HCT116 (cell line): ENCODE measurements at regions of chr11 and their contacts with region 1.

Region 1: DNA sequence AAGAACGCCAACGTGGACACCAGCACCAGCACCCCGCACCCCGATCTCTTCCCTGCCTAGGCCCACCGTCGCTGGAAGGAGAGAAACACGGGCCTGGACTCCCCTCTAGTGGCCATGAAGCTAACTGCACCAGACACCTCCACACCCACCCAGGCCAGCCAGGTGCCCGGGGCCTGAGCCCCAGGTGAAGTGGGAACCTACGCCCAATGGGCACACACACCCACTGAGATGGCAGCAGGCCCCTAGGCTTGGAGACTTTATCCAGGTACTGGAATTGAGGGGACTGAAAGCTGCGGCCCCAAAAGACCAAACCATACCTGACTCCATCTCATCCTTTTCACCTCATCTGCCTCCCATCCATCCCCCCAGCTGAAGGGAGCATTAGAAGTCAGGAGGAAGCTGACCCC is 81.0 kb downstream of the BUD13 start:
- DNase-seq: peak; percentile 6
- ATAC-seq: peak; percentile 95
- H3K4me3 ChIP-seq: no peak overlapping the region
- H3K27ac ChIP-seq: no peak overlapping the region
- H3K4me1 ChIP-seq: peaks cover 0 to 8% of the 10 kb centered on the region in 2 experiments; a peak in 2 of 4 replicates
- H3K27me3 ChIP-seq: 0 out of 2 replicates have a peak, but pooled peaks cover 4% of the 10 kb centered on the region
- CTCF ChIP-seq: peak; percentile 68 to 92 (median 85)
- POLR2A ChIP-seq: no peak
- RAD21 ChIP-seq: peak; percentile 88

Region 2: DNA sequence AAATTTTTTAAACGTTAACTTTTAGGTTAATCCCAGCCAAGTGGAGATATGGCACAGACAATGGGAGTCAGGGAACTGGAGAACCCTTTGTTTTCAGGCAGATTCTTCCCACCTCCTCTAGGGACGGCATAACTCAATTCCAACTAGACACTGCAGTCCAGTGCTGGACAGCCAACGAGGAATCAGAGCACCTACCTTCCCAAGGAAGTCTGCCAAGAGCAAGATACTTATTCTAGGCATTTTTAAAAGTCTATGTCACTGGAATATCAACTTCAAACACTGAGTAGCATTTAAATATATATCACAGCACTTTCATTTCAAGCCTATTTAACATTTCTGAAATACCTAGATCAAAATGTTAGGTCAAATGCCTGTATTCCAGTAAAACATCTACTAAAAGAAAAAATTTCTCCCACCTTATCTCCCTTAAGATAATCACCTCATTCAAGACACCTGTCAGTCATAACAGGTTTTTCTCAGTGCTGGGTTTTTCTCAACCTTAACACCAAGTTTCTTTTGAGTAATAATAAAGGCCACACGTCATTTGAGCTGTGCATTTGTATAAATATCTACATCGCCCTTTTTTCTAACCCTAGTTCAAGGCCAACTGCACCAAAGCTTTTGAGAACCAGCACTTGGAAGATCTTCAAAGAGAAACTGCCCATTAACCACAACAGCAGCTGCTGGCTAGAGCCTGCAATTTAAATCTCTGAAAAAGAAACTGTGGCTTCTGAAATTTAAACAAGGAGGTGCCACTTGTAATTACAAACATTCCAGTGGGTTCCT is 1194.7 kb before region 1 on chr11:
- CTCF ChIA-PET with region 1: no interaction called
- POLR2A ChIA-PET with region 1: no interaction called
- RAD21 ChIA-PET with region 1: no interaction called
- intact Hi-C with region 1: loop called (anchors 5 kb)
- DNase-seq: no peak
- ATAC-seq: no peak
- H3K4me3 ChIP-seq: no peak overlapping the region
- H3K27ac ChIP-seq: no peak overlapping the region
- H3K4me1 ChIP-seq: no peaks in the 10 kb centered on the region
- H3K27me3 ChIP-seq: no peaks in the 10 kb centered on the region
- CTCF ChIP-seq: no peak
- POLR2A ChIP-seq: no peak
- RAD21 ChIP-seq: no peak

Region 3: GRCh38 chr11:116217006-116217405 is 474.8 kb before region 1 on chr11:
- CTCF ChIA-PET with region 1: interaction called, 8 read pairs
- POLR2A ChIA-PET with region 1: no interaction called
- RAD21 ChIA-PET with region 1: no interaction called
- intact Hi-C with region 1: loop called (anchors 1 kb)
- DNase-seq: peak; percentile 27
- ATAC-seq: peak; percentile 89
- H3K4me3 ChIP-seq: no peak overlapping the region
- H3K27ac ChIP-seq: no peak overlapping the region
- H3K4me1 ChIP-seq: no peaks in the 10 kb centered on the region
- H3K27me3 ChIP-seq: peaks cover 14% of the 10 kb centered on the region; the same call in 1 of the 2 replicates
- CTCF ChIP-seq: peak; percentile 61 to 91 (median 87)
- POLR2A ChIP-seq: no peak
- RAD21 ChIP-seq: peak; percentile 52

Region 4: DNA sequence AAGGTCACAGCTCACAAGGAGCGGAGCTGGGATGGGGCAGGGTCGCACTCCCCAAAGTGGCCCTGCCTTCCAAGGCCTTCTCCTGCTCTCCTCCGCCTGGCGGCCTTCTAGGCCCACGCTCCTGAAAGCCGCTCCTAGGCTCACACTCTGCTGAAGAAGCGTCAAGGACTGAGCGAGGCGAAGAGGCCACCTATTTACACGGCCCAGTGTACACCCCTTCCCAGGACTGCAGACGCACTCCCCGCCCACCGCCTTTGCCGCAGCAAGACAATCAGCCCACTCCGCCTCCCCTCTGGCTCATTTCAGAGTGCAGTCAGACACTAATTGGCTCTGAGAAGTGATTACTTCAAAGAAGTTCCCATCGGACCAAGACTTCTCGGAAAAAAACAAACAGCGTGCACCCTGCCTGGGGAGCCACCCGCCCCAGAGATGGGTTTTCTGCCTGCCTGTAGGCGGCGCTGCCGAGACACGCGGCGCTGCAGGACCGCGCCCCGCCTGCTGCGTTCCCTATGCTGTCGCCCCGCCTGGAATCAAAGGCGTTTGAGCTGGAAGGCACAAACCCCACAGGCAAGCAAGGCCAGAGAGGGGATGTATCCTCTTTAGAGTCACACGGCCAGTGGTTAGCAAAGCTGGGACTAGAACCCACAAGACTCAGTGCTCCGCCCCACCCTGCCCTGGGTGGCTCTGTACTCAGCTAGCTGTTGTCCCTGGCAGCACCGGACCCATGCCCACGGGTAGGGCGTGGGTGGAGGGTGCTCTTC is 333.8 kb before region 1 on chr11:
- CTCF ChIA-PET with region 1: interaction called, 3 read pairs
- POLR2A ChIA-PET with region 1: no interaction called
- RAD21 ChIA-PET with region 1: no interaction called
- intact Hi-C with region 1: loop called (anchors 5 kb)
- DNase-seq: peak; percentile 37
- ATAC-seq: peak; percentile 97
- H3K4me3 ChIP-seq: no peak overlapping the region
- H3K27ac ChIP-seq: no peak overlapping the region
- H3K4me1 ChIP-seq: no peaks in the 10 kb centered on the region
- H3K27me3 ChIP-seq: peaks cover 34% of the 10 kb centered on the region
- CTCF ChIP-seq: peak; percentile 51 to 95 (median 92); a peak in 5 of 6 replicates
- POLR2A ChIP-seq: no peak
- RAD21 ChIP-seq: peak; percentile 72

Region 5: DNA sequence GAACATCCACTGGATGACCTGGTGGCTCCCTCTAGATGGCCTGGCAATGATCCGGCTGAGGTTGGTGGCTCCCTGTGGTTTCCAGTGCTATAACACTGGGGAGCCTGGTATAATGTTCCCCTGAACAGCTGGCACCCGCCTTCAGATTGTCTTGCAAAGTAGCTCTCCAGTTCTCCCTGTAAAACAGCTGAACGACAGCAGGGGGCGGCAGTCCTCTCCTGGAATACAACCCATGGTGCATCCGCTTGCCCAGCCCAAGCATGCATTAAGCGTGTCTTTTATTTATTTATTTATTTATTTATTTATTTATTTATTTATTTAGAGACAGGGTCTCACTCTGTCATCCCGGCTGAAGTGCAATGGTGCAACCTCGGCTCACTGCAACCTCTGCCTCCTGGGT is 177.9 kb before region 1 on chr11:
- CTCF ChIA-PET with region 1: interaction called, 11 read pairs
- POLR2A ChIA-PET with region 1: no interaction called
- RAD21 ChIA-PET with region 1: no interaction called
- intact Hi-C with region 1: loop called (anchors 1 kb)
- DNase-seq: peak; percentile 46
- ATAC-seq: peak; percentile 84
- H3K4me3 ChIP-seq: no peak overlapping the region
- H3K27ac ChIP-seq: no peak overlapping the region
- H3K4me1 ChIP-seq: no peaks in the 10 kb centered on the region
- H3K27me3 ChIP-seq: peaks cover 25% of the 10 kb centered on the region; the same call in 1 of the 2 replicates
- CTCF ChIP-seq: peak; percentile 43 to 65 (median 56)
- POLR2A ChIP-seq: no peak
- RAD21 ChIP-seq: peak; percentile 60

Region 6: GRCh38 chr11:116707746-116708145 is 16.0 kb after region 1 on chr11:
- CTCF ChIA-PET with region 1: no interaction called
- POLR2A ChIA-PET with region 1: no interaction called
- RAD21 ChIA-PET with region 1: no interaction called
- intact Hi-C with region 1: no loop called
- DNase-seq: no peak
- ATAC-seq: peak; percentile 24; the same call in 1 of the 2 replicates
- H3K4me3 ChIP-seq: no peak overlapping the region
- H3K27ac ChIP-seq: no peak overlapping the region
- H3K4me1 ChIP-seq: no peaks in the 10 kb centered on the region
- H3K27me3 ChIP-seq: no peaks in the 10 kb centered on the region
- CTCF ChIP-seq: no peak
- POLR2A ChIP-seq: no peak
- RAD21 ChIP-seq: no peak

Region 7: DNA sequence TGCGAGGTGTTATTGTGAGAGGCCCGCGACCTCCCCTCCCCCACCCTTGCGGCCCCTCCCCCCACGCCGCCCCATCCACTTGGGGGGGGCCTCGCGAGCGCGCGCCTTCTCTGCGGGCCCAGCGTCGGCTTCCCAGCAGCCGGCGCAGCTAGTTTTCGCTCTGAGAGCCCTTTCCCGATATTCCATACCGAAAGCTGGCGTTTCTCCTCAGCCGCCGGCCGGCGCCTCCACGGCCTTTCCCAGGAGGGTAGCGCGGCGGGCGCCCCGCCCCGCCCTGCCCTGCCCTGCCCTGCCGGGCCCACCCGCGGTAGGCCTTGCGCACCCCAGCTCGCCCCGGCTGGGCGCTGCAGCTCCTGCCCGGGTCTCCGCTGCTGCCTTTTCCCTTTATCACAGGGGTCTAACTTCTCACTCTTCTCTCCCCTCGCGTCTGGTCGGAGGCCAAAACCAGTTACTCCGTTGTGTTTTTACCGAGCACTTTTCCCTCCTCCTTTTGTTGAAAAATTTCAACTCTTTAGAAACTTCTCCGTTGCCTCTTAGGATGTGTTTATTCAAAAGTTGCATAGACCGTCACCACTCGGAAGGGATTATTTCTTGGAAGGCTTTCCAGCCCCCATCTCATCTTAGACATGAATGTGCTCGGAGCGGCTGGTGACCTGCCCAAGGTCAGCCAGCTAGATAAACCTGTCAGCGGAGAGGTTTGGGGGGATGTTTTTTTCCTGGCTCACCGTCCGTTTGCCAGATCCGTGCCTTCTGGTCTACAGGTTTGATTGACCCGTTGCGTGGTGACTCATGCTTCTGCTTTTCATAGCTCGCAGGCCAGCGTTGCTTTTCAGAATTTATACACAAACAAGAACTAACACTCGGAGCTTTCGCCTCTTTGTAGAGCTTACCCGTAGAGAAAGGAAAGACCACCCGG is 453.0 kb after region 1 on chr11:
- CTCF ChIA-PET with region 1: no interaction called
- POLR2A ChIA-PET with region 1: no interaction called
- RAD21 ChIA-PET with region 1: no interaction called
- intact Hi-C with region 1: no loop called
- DNase-seq: no peak
- ATAC-seq: peak; percentile 71
- H3K4me3 ChIP-seq: peak overlapping the region; percentile 71 to 93
- H3K27ac ChIP-seq: peak overlapping the region; percentile 62
- H3K4me1 ChIP-seq: peaks cover 7 to 23% of the 10 kb centered on the region in 2 experiments
- H3K27me3 ChIP-seq: no peaks in the 10 kb centered on the region
- CTCF ChIP-seq: no peak
- POLR2A ChIP-seq: no peak
- RAD21 ChIP-seq: no peak